Body of pancreas (tissue), 4 donors: ENCODE measurements at regions of chr2 and their contacts with region 1.

Region 1: GRCh38 chr2:101197215-101197745 is 46.1 kb upstream of the TBC1D8 start:
- DNase-seq: no peak
- ATAC-seq: peak; percentile 48
- H3K4me3 ChIP-seq: no peak overlapping the region
- H3K27ac ChIP-seq: peak overlapping the region in 1 of 4 donors; percentile 7
- H3K4me1 ChIP-seq: no peaks in the 10 kb centered on the region
- H3K27me3 ChIP-seq: no peaks in the 10 kb centered on the region
- CTCF ChIP-seq: peak in 5 of 7 experiments; percentile 15 to 52 (median 36)
- POLR2A ChIP-seq: no peak

Region 2: GRCh38 chr2:100941646-100942240 is 255.5 kb before region 1 on chr2:
- intact Hi-C with region 1: no loop called
- DNase-seq: no peak
- ATAC-seq: no peak
- H3K4me3 ChIP-seq: no peak overlapping the region
- H3K27ac ChIP-seq: no peak overlapping the region
- H3K4me1 ChIP-seq: peaks cover 18% of the 10 kb centered on the region
- H3K27me3 ChIP-seq: no peaks in the 10 kb centered on the region
- CTCF ChIP-seq: no peak
- POLR2A ChIP-seq: no peak

Region 3: GRCh38 chr2:101012706-101013181 is 184.5 kb before region 1 on chr2:
- intact Hi-C with region 1: loop called (anchors 5 kb)
- DNase-seq: peak; percentile 42 to 62 (median 54)
- ATAC-seq: peak; percentile 56
- H3K4me3 ChIP-seq: no peak overlapping the region
- H3K27ac ChIP-seq: no peak overlapping the region
- H3K4me1 ChIP-seq: peaks cover 4% of the 10 kb centered on the region
- H3K27me3 ChIP-seq: no peaks in the 10 kb centered on the region
- CTCF ChIP-seq: peak; percentile 53 to 93 (median 85)
- POLR2A ChIP-seq: no peak

Region 4: GRCh38 chr2:101219246-101219645 is 22.0 kb after region 1 on chr2:
- intact Hi-C with region 1: no loop called
- DNase-seq: no peak
- ATAC-seq: no peak
- H3K4me3 ChIP-seq: no peak overlapping the region
- H3K27ac ChIP-seq: no peak overlapping the region
- H3K4me1 ChIP-seq: no peaks in the 10 kb centered on the region
- H3K27me3 ChIP-seq: no peaks in the 10 kb centered on the region
- CTCF ChIP-seq: no peak
- POLR2A ChIP-seq: no peak

Region 5: DNA sequence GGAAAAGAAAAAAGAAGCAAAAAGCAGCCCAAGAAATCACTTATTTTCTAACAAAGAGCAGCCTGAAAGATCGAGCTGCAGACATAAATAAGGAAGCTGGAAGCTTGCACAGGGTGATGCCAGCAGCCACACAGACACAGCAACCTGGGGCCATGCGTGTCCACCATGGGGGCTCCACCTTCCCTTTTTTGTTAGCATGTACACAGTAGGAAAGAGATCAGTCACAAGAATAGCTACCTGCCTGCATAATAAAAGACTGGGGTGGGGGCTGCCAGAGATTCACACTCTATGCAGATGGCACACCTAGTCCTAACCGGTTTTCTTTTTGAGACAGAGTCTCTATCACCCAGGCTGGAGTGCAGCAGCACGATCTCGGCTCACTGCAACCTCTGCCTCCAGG is 52.5 kb after region 1 on chr2:
- intact Hi-C with region 1: no loop called
- DNase-seq: no peak
- ATAC-seq: no peak
- H3K4me3 ChIP-seq: no peak overlapping the region
- H3K27ac ChIP-seq: no peak overlapping the region
- H3K4me1 ChIP-seq: peaks cover 41% of the 10 kb centered on the region
- H3K27me3 ChIP-seq: no peaks in the 10 kb centered on the region
- CTCF ChIP-seq: no peak
- POLR2A ChIP-seq: no peak

Region 6: DNA sequence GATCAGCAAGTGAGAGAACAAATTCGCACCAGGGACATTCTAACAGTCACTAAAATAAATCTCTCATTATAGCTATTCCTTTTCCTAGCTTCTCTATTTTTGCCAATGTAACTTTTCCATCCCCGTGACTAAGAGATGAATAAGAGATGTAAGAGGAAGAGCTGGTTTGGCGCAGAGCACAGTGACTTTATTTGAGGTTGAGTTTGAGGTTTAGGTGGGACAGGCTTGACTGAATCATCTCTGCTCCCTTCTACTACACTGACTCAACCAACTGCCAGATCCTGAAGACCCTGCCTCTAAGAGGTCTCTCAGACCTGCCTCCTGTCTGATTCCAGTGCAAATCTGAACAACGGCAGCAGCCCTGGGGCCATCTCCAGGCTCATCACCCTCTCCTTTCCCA is 249.6 kb after region 1 on chr2:
- intact Hi-C with region 1: no loop called
- DNase-seq: no peak
- ATAC-seq: no peak
- H3K4me3 ChIP-seq: no peak overlapping the region
- H3K27ac ChIP-seq: no peak overlapping the region
- H3K4me1 ChIP-seq: no peaks in the 10 kb centered on the region
- H3K27me3 ChIP-seq: no peaks in the 10 kb centered on the region
- CTCF ChIP-seq: no peak
- POLR2A ChIP-seq: no peak